Right cardiac atrium (tissue), 5 donors: ENCODE measurements at regions of chr3 and their contacts with region 1.

Region 1: DNA sequence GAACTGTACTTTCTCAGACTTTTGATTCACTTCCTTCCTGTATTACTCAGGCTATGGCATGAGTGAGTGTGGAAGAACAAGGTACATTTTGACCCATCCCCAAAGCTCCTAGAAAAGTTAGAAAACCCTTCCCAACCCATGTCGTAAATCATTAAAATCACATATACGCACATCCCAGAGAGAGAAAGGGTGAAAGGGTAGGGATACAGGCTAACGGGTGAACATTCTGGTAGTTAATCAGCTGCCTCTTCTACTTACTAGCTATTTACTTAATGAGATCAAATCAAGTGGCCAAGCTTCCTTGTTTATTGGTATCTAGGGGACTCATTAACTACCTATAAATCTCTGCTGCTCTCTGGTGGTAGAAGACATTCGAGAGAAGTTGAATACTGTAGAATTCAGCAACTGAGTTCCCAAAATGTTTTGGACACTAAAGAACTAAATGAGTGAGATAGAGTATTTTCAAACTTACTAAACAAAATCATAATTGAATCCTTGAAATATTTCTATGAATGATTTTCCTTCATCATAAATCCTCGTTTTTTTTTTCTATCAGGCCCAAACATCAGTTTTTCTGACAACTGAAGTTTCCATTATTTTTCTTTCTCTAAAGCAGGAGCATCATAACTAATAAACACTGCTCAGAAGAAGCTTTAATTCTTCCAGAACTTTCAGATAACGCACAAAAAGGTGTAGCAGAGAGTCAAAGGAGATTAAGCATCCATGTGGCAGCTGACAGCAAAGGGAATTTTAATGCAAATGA is 124.2 kb downstream of the IMPG2 start:
- DNase-seq: no peak
- ATAC-seq: peak; percentile 73 to 82
- H3K4me3 ChIP-seq: no peak overlapping the region
- H3K27ac ChIP-seq: no peak overlapping the region
- H3K4me1 ChIP-seq: peaks cover 2% of the 10 kb centered on the region
- H3K27me3 ChIP-seq: no peaks in the 10 kb centered on the region

Region 2: GRCh38 chr3:100893590-100893989 is 302.5 kb before region 1 on chr3:
- intact Hi-C with region 1: loop called (anchors 5 to 10 kb)
- DNase-seq: peak in 1 of 3 donors; percentile 29
- ATAC-seq: peak in 1 of 2 donors; percentile 61
- H3K4me3 ChIP-seq: no peak overlapping the region
- H3K27ac ChIP-seq: no peak overlapping the region
- H3K4me1 ChIP-seq: no peaks in the 10 kb centered on the region
- H3K27me3 ChIP-seq: no peaks in the 10 kb centered on the region

Region 3: GRCh38 chr3:101069901-101070798 is 126.0 kb before region 1 on chr3:
- intact Hi-C with region 1: loop called in 2 of 4 experiments (anchors 5 to 10 kb)
- DNase-seq: peak; percentile 32 to 82 (median 79)
- ATAC-seq: peak; percentile 56 to 59
- H3K4me3 ChIP-seq: no peak overlapping the region
- H3K27ac ChIP-seq: no peak overlapping the region
- H3K4me1 ChIP-seq: no peaks in the 10 kb centered on the region
- H3K27me3 ChIP-seq: no peaks in the 10 kb centered on the region